Caco-2 (cell line): ENCODE measurements at regions of chr11 and their contacts with region 1.

Region 1: DNA sequence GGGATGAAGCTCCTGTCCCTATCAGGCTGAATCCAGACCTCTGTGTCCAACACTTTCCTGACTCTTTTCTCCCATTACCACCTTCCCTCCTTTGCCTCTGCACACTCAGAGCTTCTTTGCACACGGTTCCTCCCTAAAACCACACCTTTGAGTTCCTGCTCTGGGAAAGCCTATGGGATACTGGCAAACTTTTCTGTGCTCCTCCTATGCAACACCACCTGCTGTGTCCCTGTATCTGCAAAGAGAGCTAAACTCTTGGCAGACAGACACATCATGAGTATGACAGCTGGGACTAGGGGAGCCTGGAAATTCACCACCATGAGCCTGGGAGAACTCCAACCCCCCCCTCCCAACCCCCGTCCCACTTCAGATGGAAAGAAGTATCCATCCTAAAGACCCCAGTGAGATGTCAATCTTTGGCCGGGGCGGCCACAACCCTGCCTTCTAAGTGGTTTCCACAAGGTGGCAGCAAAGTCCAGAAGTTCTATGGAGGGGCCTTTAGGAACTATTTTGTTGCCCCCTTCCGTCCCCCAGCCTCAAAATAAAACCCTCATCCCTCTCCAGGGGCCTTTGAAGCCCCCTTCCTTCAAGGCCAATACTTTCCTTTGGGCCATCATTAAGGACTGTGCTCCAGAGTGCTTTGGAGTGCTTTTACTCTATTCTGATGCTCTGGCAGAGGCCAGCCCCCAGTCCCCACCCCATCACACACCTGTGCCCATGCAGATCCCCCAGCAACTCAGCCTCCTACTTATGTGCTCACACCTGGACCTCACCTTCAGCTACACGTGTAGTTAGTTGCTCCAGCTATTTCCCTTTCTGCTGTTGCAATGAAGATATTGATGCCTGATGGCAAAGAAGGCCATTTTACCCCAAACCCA is 19.4 kb downstream of the HTR3A start:
- DNase-seq: peak in 1 of 2 experiments; percentile 69
- H3K4me3 ChIP-seq: no peak overlapping the region
- H3K4me3 Mint-ChIP-seq: no peak overlapping the region
- H3K27ac Mint-ChIP-seq: no peak overlapping the region
- H3K4me1 ChIP-seq: no peaks in the 10 kb centered on the region
- H3K4me1 Mint-ChIP-seq: no peaks in the 10 kb centered on the region
- H3K27me3 ChIP-seq: no peaks in the 10 kb centered on the region
- H3K27me3 Mint-ChIP-seq: peaks cover 18% of the 10 kb centered on the region
- CTCF ChIP-seq: peak; percentile 93 to 96

Region 2: GRCh38 chr11:113896156-113896879 is 98.0 kb before region 1 on chr11:
- CTCF ChIA-PET with region 1: interaction called, 8 read pairs
- POLR2A ChIA-PET with region 1: no interaction called
- intact Hi-C with region 1: loop called (anchors 1 kb)
- DNase-seq: peak in 1 of 2 experiments; percentile 55
- H3K4me3 ChIP-seq: no peak overlapping the region
- H3K4me3 Mint-ChIP-seq: no peak overlapping the region
- H3K27ac Mint-ChIP-seq: no peak overlapping the region
- H3K4me1 ChIP-seq: no peaks in the 10 kb centered on the region
- H3K4me1 Mint-ChIP-seq: peaks cover 7% of the 10 kb centered on the region
- H3K27me3 ChIP-seq: no peaks in the 10 kb centered on the region
- H3K27me3 Mint-ChIP-seq: peaks cover 3% of the 10 kb centered on the region
- CTCF ChIP-seq: peak; percentile 93

Region 3: DNA sequence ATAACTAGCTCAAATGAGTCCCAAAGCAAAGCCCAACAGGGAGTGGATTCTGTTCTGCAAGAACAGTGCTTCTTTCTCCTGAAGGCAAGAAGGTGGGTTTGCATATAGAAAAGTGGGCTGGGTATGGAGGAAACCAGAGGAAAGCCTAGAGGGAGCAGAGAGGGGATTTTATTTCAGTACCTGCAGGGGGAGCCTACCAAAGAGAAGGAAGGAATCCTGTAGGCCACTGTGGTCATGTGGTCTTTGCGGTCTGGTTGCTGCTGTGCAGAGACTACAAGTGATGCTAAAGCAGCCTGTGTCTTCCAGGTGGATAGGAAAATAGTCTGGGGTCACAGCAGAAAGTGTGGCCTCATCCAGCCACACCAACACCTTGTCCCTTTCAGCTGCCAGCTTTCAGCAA is 32.0 kb after region 1 on chr11:
- CTCF ChIA-PET with region 1: interaction called, 3 read pairs
- POLR2A ChIA-PET with region 1: no interaction called
- intact Hi-C with region 1: loop called (anchors 2 kb)
- DNase-seq: peak in 1 of 2 experiments; percentile 53
- H3K4me3 ChIP-seq: no peak overlapping the region
- H3K4me3 Mint-ChIP-seq: no peak overlapping the region
- H3K27ac Mint-ChIP-seq: no peak overlapping the region
- H3K4me1 ChIP-seq: peaks cover 8% of the 10 kb centered on the region
- H3K4me1 Mint-ChIP-seq: peaks cover 9% of the 10 kb centered on the region
- H3K27me3 ChIP-seq: peaks cover 1% of the 10 kb centered on the region
- H3K27me3 Mint-ChIP-seq: peaks cover 2% of the 10 kb centered on the region
- CTCF ChIP-seq: peak; percentile 62 to 76

Region 4: DNA sequence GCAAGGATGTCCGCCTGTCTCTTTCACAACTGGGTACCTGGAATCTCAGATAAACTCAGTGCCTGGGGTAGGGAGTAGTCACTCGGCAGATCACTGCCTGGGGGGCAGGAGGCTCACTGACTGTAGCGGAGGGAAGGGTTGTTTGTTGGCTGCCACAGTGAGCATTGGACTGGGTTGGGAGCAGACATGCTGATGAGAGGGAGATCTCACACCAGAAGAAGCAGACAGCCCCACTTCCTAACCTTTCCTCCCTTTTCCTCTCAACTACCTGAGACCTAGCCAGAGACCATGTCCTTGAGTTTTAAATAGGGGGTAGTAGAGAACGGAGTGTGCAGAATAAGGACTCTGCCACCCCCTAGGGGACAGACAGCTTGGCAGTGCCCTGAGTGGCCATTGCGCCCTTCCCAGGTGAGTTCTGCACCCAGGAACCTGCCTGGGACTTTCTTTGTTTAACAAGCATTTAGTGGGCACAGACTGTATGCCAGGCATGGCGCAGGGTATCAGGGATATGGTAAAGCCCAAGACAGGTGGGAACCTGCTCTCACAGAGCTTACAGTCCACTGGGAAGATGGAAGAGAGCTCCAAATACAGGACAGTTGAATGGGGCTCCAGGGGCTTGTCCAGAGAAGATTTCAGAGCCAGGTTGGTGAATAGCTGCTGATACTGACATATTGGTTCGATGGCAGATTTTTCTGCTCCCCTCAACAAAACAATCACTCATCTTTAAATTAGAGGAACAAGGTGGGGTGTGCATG is 186.2 kb after region 1 on chr11:
- CTCF ChIA-PET with region 1: interaction called, 4 read pairs
- POLR2A ChIA-PET with region 1: no interaction called
- intact Hi-C with region 1: loop called (anchors 1 kb)
- DNase-seq: peak; percentile 64 to 73
- H3K4me3 ChIP-seq: no peak overlapping the region
- H3K4me3 Mint-ChIP-seq: no peak overlapping the region
- H3K27ac Mint-ChIP-seq: no peak overlapping the region
- H3K4me1 ChIP-seq: peaks cover 22% of the 10 kb centered on the region
- H3K4me1 Mint-ChIP-seq: peaks cover 25% of the 10 kb centered on the region
- H3K27me3 ChIP-seq: no peaks in the 10 kb centered on the region
- H3K27me3 Mint-ChIP-seq: no peaks in the 10 kb centered on the region
- CTCF ChIP-seq: peak; percentile 80 to 91

Region 5: DNA sequence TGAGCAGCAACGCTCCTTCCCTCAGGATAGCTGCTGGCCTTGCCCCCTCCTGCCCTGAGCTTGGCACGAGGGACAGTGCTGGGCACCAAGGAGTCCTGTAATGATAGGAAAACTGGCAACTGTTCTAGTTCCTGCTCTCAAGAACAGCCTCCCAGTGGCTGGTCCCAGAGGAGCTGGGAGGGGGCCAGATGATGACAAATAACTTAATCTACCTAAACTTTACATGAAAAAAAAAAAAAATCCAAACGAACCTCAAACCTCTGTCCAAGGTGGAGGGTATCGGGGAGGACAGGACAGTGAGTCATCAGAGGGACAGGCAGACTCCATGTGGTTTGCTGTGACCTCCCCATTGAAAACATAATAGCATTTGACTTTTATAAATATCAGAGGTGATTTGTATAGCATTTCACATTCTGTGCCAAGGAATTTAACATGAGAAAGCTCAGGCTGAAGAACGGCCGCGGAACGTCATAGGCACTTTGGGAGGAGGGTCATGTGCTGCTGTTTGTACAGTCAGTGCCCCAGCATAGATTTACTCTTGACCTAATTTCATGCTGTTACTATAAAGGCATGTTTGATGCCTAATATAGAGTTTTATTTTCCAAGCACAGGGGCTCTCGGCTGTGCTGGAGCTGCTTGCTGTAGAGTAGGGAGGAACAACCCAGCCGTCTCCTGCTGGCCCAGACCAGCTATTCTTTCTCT is 203.6 kb after region 1 on chr11:
- CTCF ChIA-PET with region 1: no interaction called
- POLR2A ChIA-PET with region 1: no interaction called
- intact Hi-C with region 1: loop called (anchors 1 kb)
- DNase-seq: no peak
- H3K4me3 ChIP-seq: no peak overlapping the region
- H3K4me3 Mint-ChIP-seq: no peak overlapping the region
- H3K27ac Mint-ChIP-seq: no peak overlapping the region
- H3K4me1 ChIP-seq: no peaks in the 10 kb centered on the region; the same call in 1 of the 2 replicates
- H3K4me1 Mint-ChIP-seq: peaks cover 7% of the 10 kb centered on the region
- H3K27me3 ChIP-seq: no peaks in the 10 kb centered on the region
- H3K27me3 Mint-ChIP-seq: no peaks in the 10 kb centered on the region
- CTCF ChIP-seq: no peak

Region 6: GRCh38 chr11:114250993-114251814 is 256.9 kb after region 1 on chr11:
- CTCF ChIA-PET with region 1: no interaction called
- POLR2A ChIA-PET with region 1: no interaction called
- intact Hi-C with region 1: no loop called
- DNase-seq: no peak
- H3K4me3 ChIP-seq: no peak overlapping the region
- H3K4me3 Mint-ChIP-seq: no peak overlapping the region
- H3K27ac Mint-ChIP-seq: no peak overlapping the region
- H3K4me1 ChIP-seq: no peaks in the 10 kb centered on the region
- H3K4me1 Mint-ChIP-seq: no peaks in the 10 kb centered on the region
- H3K27me3 ChIP-seq: no peaks in the 10 kb centered on the region
- H3K27me3 Mint-ChIP-seq: no peaks in the 10 kb centered on the region
- CTCF ChIP-seq: no peak